ENCODE measurements at regions of chr10 and their contacts with region 1.

Region 1: GRCh38 chr10:69408318-69409175 is 8.2 kb downstream of the TACR2 start:
- DNase-seq: peak; percentile 82 to 92 (median 90)
- ATAC-seq: peak; percentile 94
- H3K4me3 ChIP-seq: peak overlapping the region; percentile 54
- H3K4me3 Mint-ChIP-seq: peak overlapping the region; percentile 65 to 83 (median 74)
- H3K27ac ChIP-seq: peak overlapping the region; percentile 76
- H3K27ac Mint-ChIP-seq: peak overlapping the region; percentile 82 to 96 (median 92)
- H3K4me1 ChIP-seq: peaks cover 13 to 14% of the 10 kb centered on the region in 2 donors
- H3K4me1 Mint-ChIP-seq: peaks cover 14 to 28% (median 20%) of the 10 kb centered on the region in 7 donors
- H3K27me3 ChIP-seq: no peaks in the 10 kb centered on the region
- H3K27me3 Mint-ChIP-seq: no peaks in the 10 kb centered on the region

Region 2: DNA sequence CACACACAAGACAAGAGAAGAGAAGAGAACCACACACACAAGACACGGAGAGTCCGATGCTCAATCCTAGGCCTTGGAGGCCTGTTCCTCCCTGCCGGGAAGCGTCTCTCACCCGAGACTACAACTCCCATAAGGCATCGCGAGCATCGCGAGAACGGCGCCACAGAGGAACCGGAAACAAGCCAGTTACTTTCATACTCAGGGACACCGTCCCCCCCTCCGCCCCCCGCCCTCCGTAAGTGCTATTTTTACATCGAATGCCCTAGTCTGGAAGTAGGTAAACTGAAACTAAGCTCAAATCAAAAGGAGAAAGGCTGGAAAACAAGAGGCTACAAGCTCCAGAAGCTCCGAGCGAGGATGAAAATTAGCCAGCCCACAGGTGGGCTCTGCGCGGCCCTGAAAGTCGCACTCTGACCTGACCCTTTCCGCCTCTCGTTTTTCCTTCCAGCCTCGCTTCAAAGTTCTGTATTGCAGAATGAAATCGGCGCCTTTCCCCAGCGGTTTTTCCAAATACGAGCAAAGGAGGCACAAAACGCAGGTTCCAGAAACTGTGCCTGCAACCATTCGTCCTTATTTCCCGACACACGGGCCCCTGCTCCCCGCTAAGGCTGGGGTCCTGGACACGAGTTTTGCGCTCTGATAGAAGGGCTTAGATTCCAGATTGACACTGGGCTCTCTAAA is 1559.1 kb before region 1 on chr10:
- CTCF ChIA-PET with region 1: no interaction called
- POLR2A ChIA-PET with region 1: no interaction called
- intact Hi-C with region 1: loop called in 1 of 2 experiments (anchors 5 kb)
- DNase-seq: peak; percentile 81 to 91 (median 89)
- ATAC-seq: peak; percentile 100
- H3K4me3 ChIP-seq: peak overlapping the region; percentile 79
- H3K4me3 Mint-ChIP-seq: peak overlapping the region; percentile 84 to 99 (median 96)
- H3K27ac ChIP-seq: peak overlapping the region; percentile 82
- H3K27ac Mint-ChIP-seq: peak overlapping the region; percentile 81 to 100 (median 97)
- H3K4me1 ChIP-seq: peaks cover 5 to 6% of the 10 kb centered on the region in 2 donors
- H3K4me1 Mint-ChIP-seq: peaks cover 5 to 12% (median 8%) of the 10 kb centered on the region in 7 donors
- H3K27me3 ChIP-seq: no peaks in the 10 kb centered on the region
- H3K27me3 Mint-ChIP-seq: no peaks in the 10 kb centered on the region

Region 3: GRCh38 chr10:69179743-69180524 is 228.6 kb before region 1 on chr10 and contains the start of gene SUPV3L1:
- CTCF ChIA-PET with region 1: no interaction called
- POLR2A ChIA-PET with region 1: no interaction called
- intact Hi-C with region 1: loop called (anchors 1 kb)
- DNase-seq: peak; percentile 72 to 91 (median 87)
- ATAC-seq: peak; percentile 87
- H3K4me3 ChIP-seq: peak within 1 kb of the TSS; percentile 83
- H3K4me3 Mint-ChIP-seq: peak within 1 kb of the TSS; percentile 85 to 98 (median 96)
- H3K27ac ChIP-seq: peak within 1 kb of the TSS; percentile 95
- H3K27ac Mint-ChIP-seq: peak within 1 kb of the TSS; percentile 98 to 100 (median 99)
- H3K4me1 ChIP-seq: peaks cover 12 to 15% of the 10 kb centered on the region in 2 donors
- H3K4me1 Mint-ChIP-seq: peaks cover 22 to 55% (median 38%) of the 10 kb centered on the region in 7 donors
- H3K27me3 ChIP-seq: no peaks in the 10 kb centered on the region
- H3K27me3 Mint-ChIP-seq: no peaks in the 10 kb centered on the region
- total RNA-seq, gene SUPV3L1: 39.3 to 63.2 (median 42.1) TPM

Region 4: GRCh38 chr10:69392481-69393000 is 16.0 kb before region 1 on chr10:
- CTCF ChIA-PET with region 1: interaction called, 6 read pairs
- POLR2A ChIA-PET with region 1: no interaction called
- intact Hi-C with region 1: loop called in 1 of 2 experiments (anchors 1 kb)
- DNase-seq: peak; percentile 57 to 85 (median 81)
- ATAC-seq: peak; percentile 99
- H3K4me3 ChIP-seq: no peak overlapping the region
- H3K4me3 Mint-ChIP-seq: no peak overlapping the region
- H3K27ac ChIP-seq: peak overlapping the region; percentile 44
- H3K27ac Mint-ChIP-seq: peak overlapping the region; percentile 56 to 93 (median 84)
- H3K4me1 ChIP-seq: peaks cover 4 to 6% of the 10 kb centered on the region in 2 donors
- H3K4me1 Mint-ChIP-seq: peaks cover 8 to 35% (median 20%) of the 10 kb centered on the region in 7 donors
- H3K27me3 ChIP-seq: no peaks in the 10 kb centered on the region
- H3K27me3 Mint-ChIP-seq: no peaks in the 10 kb centered on the region

Region 5: GRCh38 chr10:69506834-69507721 is 98.5 kb after region 1 on chr10:
- CTCF ChIA-PET with region 1: interaction called, 21 read pairs
- POLR2A ChIA-PET with region 1: interaction called, 6 read pairs
- intact Hi-C with region 1: loop called (anchors 1 kb)
- DNase-seq: peak in 2 of 9 donors; percentile 5
- ATAC-seq: peak; percentile 11
- H3K4me3 ChIP-seq: peak overlapping the region; percentile 43
- H3K4me3 Mint-ChIP-seq: peak overlapping the region; percentile 63 to 80 (median 74)
- H3K27ac ChIP-seq: no peak overlapping the region
- H3K27ac Mint-ChIP-seq: peak overlapping the region; percentile 58 to 93 (median 86)
- H3K4me1 ChIP-seq: peaks cover 7 to 8% of the 10 kb centered on the region in 2 donors
- H3K4me1 Mint-ChIP-seq: peaks cover 9 to 16% (median 10%) of the 10 kb centered on the region in 7 donors
- H3K27me3 ChIP-seq: no peaks in the 10 kb centered on the region
- H3K27me3 Mint-ChIP-seq: peaks cover 0 to 29% (median 0%) of the 10 kb centered on the region in 5 donors

Measured in naive thymus-derived CD4-positive, alpha-beta T cell (primary cell).